HEK293 (cell line): ENCODE measurements at regions of chr10 and their contacts with region 1.

Region 1: GRCh38 chr10:101834341-101834740 is 9.3 kb downstream of the KCNIP2 start:
- H3K4me3 ChIP-seq: no peak overlapping the region
- H3K27ac ChIP-seq: no peak overlapping the region
- H3K4me1 ChIP-seq: peaks cover 7% of the 10 kb centered on the region
- CTCF ChIP-seq: no peak

Region 2: DNA sequence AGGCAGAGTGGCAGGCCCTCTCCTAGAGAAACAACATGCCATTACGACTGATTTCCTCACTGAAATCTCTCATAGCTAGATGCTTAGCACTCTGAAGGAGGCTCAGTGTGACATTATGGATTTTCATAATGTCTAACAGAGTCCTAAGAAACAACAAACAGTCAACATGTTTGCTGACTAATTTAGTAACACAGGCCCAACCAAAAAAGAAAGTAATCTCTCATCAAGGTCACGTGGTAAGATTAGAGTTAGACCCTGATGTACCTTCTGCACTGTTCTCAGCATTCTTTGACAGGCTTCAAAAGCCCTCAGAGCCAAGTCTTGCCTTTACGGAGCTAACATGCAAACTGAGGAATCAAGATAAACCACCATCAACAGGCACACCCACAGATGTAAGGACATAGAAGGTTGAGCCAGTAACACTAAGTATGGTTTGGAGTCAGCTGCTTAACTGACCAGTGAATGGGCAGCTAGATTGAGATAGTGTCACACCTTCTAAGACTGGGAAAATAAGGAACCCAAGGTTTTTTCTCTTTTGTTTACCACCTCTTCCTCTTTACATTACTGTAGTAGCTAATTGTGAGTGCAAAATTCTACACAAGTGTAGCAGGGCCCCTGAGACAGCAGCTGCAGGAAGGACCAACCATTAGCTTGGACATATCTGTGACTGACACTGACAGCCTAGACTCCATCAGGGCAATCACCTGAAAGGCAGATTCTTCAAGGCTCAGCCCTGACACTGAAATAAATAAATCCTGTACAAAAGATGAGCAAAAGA is 24.6 kb after region 1 on chr10:
- CTCF ChIA-PET with region 1: interaction called, 12 read pairs
- POLR2A ChIA-PET with region 1: no interaction called
- H3K4me3 ChIP-seq: no peak overlapping the region
- H3K27ac ChIP-seq: no peak overlapping the region
- H3K4me1 ChIP-seq: no peaks in the 10 kb centered on the region
- CTCF ChIP-seq: no peak

Region 3: GRCh38 chr10:101938316-101939281 is 104.3 kb after region 1 on chr10:
- CTCF ChIA-PET with region 1: no interaction called
- POLR2A ChIA-PET with region 1: no interaction called
- H3K4me3 ChIP-seq: no peak overlapping the region
- H3K27ac ChIP-seq: no peak overlapping the region
- H3K4me1 ChIP-seq: peaks cover 9% of the 10 kb centered on the region
- CTCF ChIP-seq: no peak